Prostate gland (tissue), 2 donors: ENCODE measurements at regions of chr1 and their contacts with region 1.

Region 1: GRCh38 chr1:201792534-201793305 is 36.2 kb upstream of the IPO9 start:
- DNase-seq: peak; percentile 71
- H3K4me3 ChIP-seq: no peak overlapping the region
- H3K27ac ChIP-seq: peak overlapping the region in 1 of 2 donors; percentile 53
- H3K4me1 ChIP-seq: peaks cover 13% of the 10 kb centered on the region
- H3K27me3 ChIP-seq: no peaks in the 10 kb centered on the region
- CTCF ChIP-seq: peak; percentile 82 to 96 (median 96)
- POLR2A ChIP-seq: no peak

Region 2: GRCh38 chr1:201559679-201560162 is 233.0 kb before region 1 on chr1:
- intact Hi-C with region 1: loop called (anchors 5 kb)
- DNase-seq: peak; percentile 73
- H3K4me3 ChIP-seq: no peak overlapping the region
- H3K27ac ChIP-seq: no peak overlapping the region
- H3K4me1 ChIP-seq: no peaks in the 10 kb centered on the region
- H3K27me3 ChIP-seq: no peaks in the 10 kb centered on the region
- CTCF ChIP-seq: peak; percentile 86 to 98 (median 96)
- POLR2A ChIP-seq: no peak

Region 3: GRCh38 chr1:201709564-201710295 is 83.0 kb before region 1 on chr1:
- intact Hi-C with region 1: loop called (anchors 1 kb)
- DNase-seq: peak; percentile 51
- H3K4me3 ChIP-seq: no peak overlapping the region
- H3K27ac ChIP-seq: no peak overlapping the region
- H3K4me1 ChIP-seq: no peaks in the 10 kb centered on the region
- H3K27me3 ChIP-seq: no peaks in the 10 kb centered on the region
- CTCF ChIP-seq: peak; percentile 85 to 92 (median 86)
- POLR2A ChIP-seq: no peak